PC-9 (cell line): ENCODE measurements at regions of chr1 and their contacts with region 1.

Region 1: DNA sequence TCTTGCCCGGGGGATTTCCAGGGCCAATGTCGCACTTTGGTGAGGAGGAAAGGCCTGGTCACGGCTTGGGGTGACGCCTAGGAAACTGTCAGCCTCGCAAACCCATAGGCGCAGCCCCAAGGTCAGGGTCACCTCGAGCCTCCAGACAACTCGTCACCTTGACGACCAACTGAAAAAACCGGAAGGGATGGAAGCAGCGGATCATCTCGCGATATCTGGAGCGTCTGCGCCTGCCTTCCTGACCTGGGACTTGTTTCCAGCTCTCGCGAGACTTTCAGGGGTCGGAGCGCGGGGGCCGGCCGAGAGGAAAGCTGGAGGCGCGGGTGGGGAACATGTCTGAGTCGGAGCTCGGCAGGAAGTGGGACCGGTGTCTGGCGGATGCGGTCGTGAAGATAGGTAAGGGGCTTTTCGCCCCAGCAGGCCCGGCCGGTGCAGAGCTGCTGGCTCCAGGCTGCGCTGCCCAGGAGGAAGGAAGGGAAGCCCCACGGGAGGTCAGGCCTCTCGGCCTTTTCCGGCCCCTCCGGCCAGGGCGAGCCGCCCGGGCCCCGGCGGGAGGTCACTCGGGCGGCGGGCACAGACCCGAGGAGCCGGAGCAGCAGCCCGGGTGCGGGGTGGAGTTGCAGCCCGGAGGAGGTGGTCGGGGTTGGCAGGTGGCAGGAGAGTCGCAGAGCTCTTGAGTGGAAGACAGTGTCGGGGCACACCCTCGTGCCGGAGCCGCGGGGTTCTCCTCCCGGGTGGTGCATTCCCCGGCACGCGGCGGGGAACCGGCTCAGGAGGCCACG is 47.2 kb upstream of the NBL1 start:
- DNase-seq: peak; percentile 92 to 94
- H3K4me3 ChIP-seq: peak overlapping the region; percentile 74
- H3K27ac ChIP-seq: peak overlapping the region; percentile 84
- H3K4me1 ChIP-seq: peaks cover 18% of the 10 kb centered on the region; the same call in 1 of the 2 replicates
- H3K27me3 ChIP-seq: no peaks in the 10 kb centered on the region
- CTCF ChIP-seq: no peak

Region 2: DNA sequence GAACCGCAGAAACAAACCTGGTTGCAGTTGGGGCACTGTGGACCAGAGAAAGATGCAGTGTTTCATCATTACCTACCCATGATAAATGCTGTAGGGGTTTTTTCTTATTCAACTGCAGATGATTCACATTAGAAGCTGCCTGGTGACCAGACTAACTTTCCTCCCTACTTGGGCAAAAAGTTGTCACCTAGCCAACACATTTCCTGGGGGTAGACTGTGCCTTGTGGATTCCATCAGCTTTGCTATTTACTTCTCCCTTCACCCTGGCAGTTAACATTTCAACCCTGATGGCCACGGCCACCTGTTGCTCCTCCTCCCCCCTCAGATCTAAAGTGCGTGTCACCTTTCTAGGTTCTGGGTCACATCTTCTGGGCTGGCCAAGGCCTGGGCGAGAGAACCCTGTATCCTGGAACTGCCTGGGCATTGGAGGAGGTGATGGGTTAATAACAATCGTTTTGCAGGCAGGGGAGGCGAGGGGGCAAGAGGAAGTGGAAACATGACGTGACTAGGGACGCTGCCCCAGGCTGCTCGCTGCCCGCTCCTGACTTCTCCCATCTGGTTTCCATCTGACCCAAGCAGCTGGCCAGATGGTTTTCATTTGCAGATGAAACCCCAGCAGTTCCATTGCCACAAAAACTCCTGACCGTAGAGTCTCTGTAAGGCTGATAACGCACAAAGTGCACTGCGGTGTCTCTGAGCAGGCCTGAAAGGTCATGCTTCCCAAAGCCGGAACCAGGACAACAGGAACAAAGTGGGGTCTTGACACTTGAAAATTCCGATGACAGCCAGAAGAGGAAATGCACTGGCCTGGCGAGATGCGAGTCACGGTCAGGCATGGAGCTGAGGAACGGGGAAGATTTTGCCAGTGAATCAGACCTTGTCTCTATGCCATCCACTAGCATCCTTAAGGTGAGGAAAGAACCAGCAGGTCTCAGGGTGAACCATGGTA is 148.1 kb before region 1 on chr1:
- CTCF ChIA-PET with region 1: no interaction called
- POLR2A ChIA-PET with region 1: no interaction called
- intact Hi-C with region 1: loop called (anchors 2 kb)
- DNase-seq: peak; percentile 50 to 66
- H3K4me3 ChIP-seq: no peak overlapping the region
- H3K27ac ChIP-seq: peak overlapping the region; percentile 51
- H3K4me1 ChIP-seq: peaks cover 40% of the 10 kb centered on the region
- H3K27me3 ChIP-seq: no peaks in the 10 kb centered on the region
- CTCF ChIP-seq: no peak

Region 3: GRCh38 chr1:19547814-19548213 is 49.1 kb before region 1 on chr1:
- CTCF ChIA-PET with region 1: no interaction called
- POLR2A ChIA-PET with region 1: no interaction called
- intact Hi-C with region 1: no loop called
- DNase-seq: no peak
- H3K4me3 ChIP-seq: no peak overlapping the region
- H3K27ac ChIP-seq: no peak overlapping the region
- H3K4me1 ChIP-seq: no peaks in the 10 kb centered on the region
- H3K27me3 ChIP-seq: no peaks in the 10 kb centered on the region
- CTCF ChIP-seq: no peak

Region 4: GRCh38 chr1:19643602-19644394 is 46.9 kb after region 1 on chr1 and contains the start of gene NBL1:
- CTCF ChIA-PET with region 1: no interaction called
- POLR2A ChIA-PET with region 1: no interaction called
- intact Hi-C with region 1: loop called (anchors 5 kb)
- DNase-seq: peak in 1 of 2 experiments; percentile 45
- H3K4me3 ChIP-seq: peak within 1 kb of the TSS; percentile 66
- H3K27ac ChIP-seq: no peak within 1 kb of the TSS
- H3K4me1 ChIP-seq: peaks cover 35% of the 10 kb centered on the region
- H3K27me3 ChIP-seq: no peaks in the 10 kb centered on the region
- CTCF ChIP-seq: no peak
- total RNA-seq, gene NBL1: 32.5 and 36.9 TPM in 2 replicates